ENCODE measurements at regions of chr11 and their contacts with region 1.

Region 1: DNA sequence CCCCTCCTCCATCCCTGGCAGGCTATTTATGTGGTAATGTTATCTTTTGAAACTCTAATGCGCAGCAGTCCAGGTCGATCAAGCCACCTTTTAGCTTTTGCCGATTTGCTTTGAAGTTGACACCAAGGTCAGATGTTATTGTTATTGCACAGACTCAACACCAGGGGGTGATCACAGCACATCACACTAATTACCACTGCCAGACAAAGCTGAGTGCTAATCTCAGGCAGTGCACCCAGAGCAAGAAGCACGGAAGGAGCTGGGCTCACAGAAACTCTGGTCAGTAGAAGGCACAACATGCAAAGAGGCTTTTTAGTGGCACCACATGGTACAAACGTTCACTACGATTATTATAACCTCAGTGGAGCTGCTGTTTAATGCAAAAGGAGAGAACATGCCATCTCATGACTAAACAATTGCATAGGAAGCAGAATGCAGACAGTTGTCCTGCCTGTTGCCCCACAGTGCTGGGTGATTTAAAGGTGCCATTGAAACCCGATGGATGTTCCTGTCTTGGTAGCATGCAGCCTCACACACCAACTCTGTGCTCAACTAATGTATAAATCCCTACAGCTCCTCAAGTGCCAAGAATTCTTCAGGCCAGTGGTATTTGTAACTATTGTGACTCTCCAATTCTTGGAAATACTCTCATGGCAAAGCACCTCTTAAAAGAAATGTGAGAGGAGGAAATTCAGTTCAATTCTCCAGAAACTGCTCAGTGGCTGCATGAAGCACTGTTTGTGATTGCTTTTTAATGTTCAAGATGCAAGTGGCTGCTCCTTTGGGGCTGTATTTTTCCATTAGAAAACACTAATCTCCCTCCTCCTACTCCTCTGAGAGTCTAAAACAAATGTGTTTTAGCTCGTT is 353.9 kb upstream of the DDI1 start:
- DNase-seq: peak; percentile 75
- ATAC-seq: peak; percentile 88
- H3K4me3 ChIP-seq: no peak overlapping the region
- H3K27ac ChIP-seq: peak overlapping the region; percentile 57; the same call in 1 of the 2 replicates
- H3K4me1 ChIP-seq: peaks cover 5% of the 10 kb centered on the region
- H3K27me3 ChIP-seq: no peaks in the 10 kb centered on the region
- CTCF ChIP-seq: peak; percentile 82
- POLR2A ChIP-seq: no peak
- RAD21 ChIP-seq: peak; percentile 86

Region 2: DNA sequence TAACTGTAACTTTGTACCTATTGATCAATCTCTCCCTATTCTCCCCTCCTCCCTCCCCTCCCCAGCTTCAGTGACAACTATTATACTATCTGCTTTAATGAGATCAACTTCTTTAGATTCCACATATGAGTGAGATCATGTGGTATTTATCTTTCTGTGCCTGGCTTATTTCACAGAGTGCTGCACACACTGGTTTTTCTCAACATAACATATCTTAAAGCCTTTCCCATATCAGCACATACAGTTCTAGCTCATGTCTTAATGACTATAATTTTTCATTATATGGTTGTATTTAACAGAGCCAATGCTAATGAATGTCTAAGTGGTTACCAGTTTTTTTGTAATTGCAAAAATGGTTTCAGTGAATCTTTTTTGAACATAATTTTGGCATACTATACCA is 13.6 kb after region 1 on chr11:
- CTCF ChIA-PET with region 1: interaction called, 10 read pairs
- POLR2A ChIA-PET with region 1: no interaction called
- dilution Hi-C with region 1: no loop called
- in situ Hi-C with region 1: no loop called
- intact Hi-C with region 1: no loop called
- DNase-seq: no peak
- ATAC-seq: no peak
- H3K4me3 ChIP-seq: no peak overlapping the region
- H3K27ac ChIP-seq: no peak overlapping the region
- H3K4me1 ChIP-seq: peaks cover 7% of the 10 kb centered on the region
- H3K27me3 ChIP-seq: no peaks in the 10 kb centered on the region
- CTCF ChIP-seq: no peak
- POLR2A ChIP-seq: no peak
- RAD21 ChIP-seq: no peak

Region 3: GRCh38 chr11:103832762-103833161 is 150.2 kb after region 1 on chr11:
- CTCF ChIA-PET with region 1: no interaction called
- POLR2A ChIA-PET with region 1: no interaction called
- dilution Hi-C with region 1: no loop called
- in situ Hi-C with region 1: no loop called
- intact Hi-C with region 1: no loop called
- DNase-seq: peak; percentile 32
- ATAC-seq: no peak
- H3K4me3 ChIP-seq: no peak overlapping the region
- H3K27ac ChIP-seq: no peak overlapping the region
- H3K4me1 ChIP-seq: no peaks in the 10 kb centered on the region
- H3K27me3 ChIP-seq: no peaks in the 10 kb centered on the region
- CTCF ChIP-seq: no peak
- POLR2A ChIP-seq: no peak
- RAD21 ChIP-seq: no peak

Region 4: DNA sequence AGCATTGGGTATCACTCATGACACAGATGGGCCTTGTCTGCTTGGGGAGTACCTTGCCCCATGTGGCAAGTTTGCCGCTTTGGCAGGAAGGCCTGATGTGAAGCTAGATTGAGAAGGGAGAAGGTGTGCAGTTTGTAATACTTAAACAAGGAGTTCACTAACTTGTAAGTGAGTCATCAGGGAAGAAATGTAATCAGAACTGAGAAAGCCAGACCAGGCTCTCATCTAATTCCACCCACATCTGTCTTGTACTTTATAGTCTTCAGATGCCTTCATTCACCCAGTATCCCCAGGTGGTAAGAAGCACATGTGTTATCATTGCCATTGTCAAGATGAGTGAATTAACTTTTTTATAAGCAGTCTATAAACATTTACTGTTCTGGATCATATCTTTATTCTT is 237.9 kb after region 1 on chr11:
- CTCF ChIA-PET with region 1: interaction called, 4 read pairs
- POLR2A ChIA-PET with region 1: no interaction called
- dilution Hi-C with region 1: no loop called
- in situ Hi-C with region 1: no loop called
- intact Hi-C with region 1: loop called (anchors 5 kb)
- DNase-seq: peak; percentile 73
- ATAC-seq: peak; percentile 91
- H3K4me3 ChIP-seq: no peak overlapping the region
- H3K27ac ChIP-seq: no peak overlapping the region
- H3K4me1 ChIP-seq: peaks cover 3% of the 10 kb centered on the region; the same call in 1 of the 2 replicates
- H3K27me3 ChIP-seq: no peaks in the 10 kb centered on the region
- CTCF ChIP-seq: no peak
- POLR2A ChIP-seq: no peak
- RAD21 ChIP-seq: no peak

Region 5: GRCh38 chr11:104033134-104033533 is 350.6 kb after region 1 on chr11:
- CTCF ChIA-PET with region 1: no interaction called
- POLR2A ChIA-PET with region 1: no interaction called
- dilution Hi-C with region 1: no loop called
- in situ Hi-C with region 1: no loop called
- intact Hi-C with region 1: no loop called
- DNase-seq: peak; percentile 97
- ATAC-seq: peak; percentile 97
- H3K4me3 ChIP-seq: no peak overlapping the region
- H3K27ac ChIP-seq: peak overlapping the region; percentile 100; the same call in 1 of the 2 replicates
- H3K4me1 ChIP-seq: peaks cover 4% of the 10 kb centered on the region
- H3K27me3 ChIP-seq: no peaks in the 10 kb centered on the region
- CTCF ChIP-seq: no peak
- POLR2A ChIP-seq: no peak
- RAD21 ChIP-seq: no peak

Region 6: GRCh38 chr11:104151404-104152204 is 469.1 kb after region 1 on chr11:
- CTCF ChIA-PET with region 1: interaction called, 5 read pairs
- POLR2A ChIA-PET with region 1: no interaction called
- dilution Hi-C with region 1: no loop called
- in situ Hi-C with region 1: no loop called
- intact Hi-C with region 1: loop called (anchors 2 kb)
- DNase-seq: no peak
- ATAC-seq: no peak
- H3K4me3 ChIP-seq: no peak overlapping the region
- H3K27ac ChIP-seq: no peak overlapping the region
- H3K4me1 ChIP-seq: peaks cover 4% of the 10 kb centered on the region; the same call in 1 of the 2 replicates
- H3K27me3 ChIP-seq: no peaks in the 10 kb centered on the region
- CTCF ChIP-seq: peak; percentile 50
- POLR2A ChIP-seq: no peak
- RAD21 ChIP-seq: peak; percentile 41

Measured in IMR-90 (cell line).